Activated naive CD4-positive, alpha-beta T cell treated with anti-CD3 and anti-CD28 coated beads for 36 hours (primary cell): ENCODE measurements at regions of chr7 and their contacts with region 1.

Region 1: GRCh38 chr7:31134246-31135188 is 82.4 kb downstream of the ADCYAP1R1 start:
- DNase-seq: peak; percentile 68
- H3K4me3 Mint-ChIP-seq: no peak overlapping the region
- H3K27ac Mint-ChIP-seq: no peak overlapping the region
- H3K4me1 Mint-ChIP-seq: peaks cover 1% of the 10 kb centered on the region
- H3K27me3 Mint-ChIP-seq: no peaks in the 10 kb centered on the region

Region 2: GRCh38 chr7:30983042-30983913 is 151.2 kb before region 1 on chr7:
- CTCF ChIA-PET with region 1: interaction called, 25 read pairs
- intact Hi-C with region 1: no loop called
- DNase-seq: peak; percentile 85
- H3K4me3 Mint-ChIP-seq: no peak overlapping the region
- H3K27ac Mint-ChIP-seq: no peak overlapping the region
- H3K4me1 Mint-ChIP-seq: peaks cover 4% of the 10 kb centered on the region
- H3K27me3 Mint-ChIP-seq: peaks cover 45% of the 10 kb centered on the region

Region 3: GRCh38 chr7:31122649-31123058 is 11.9 kb before region 1 on chr7:
- CTCF ChIA-PET with region 1: interaction called, 61 read pairs
- intact Hi-C with region 1: no loop called
- DNase-seq: peak; percentile 64
- H3K4me3 Mint-ChIP-seq: no peak overlapping the region
- H3K27ac Mint-ChIP-seq: no peak overlapping the region
- H3K4me1 Mint-ChIP-seq: no peaks in the 10 kb centered on the region
- H3K27me3 Mint-ChIP-seq: peaks cover 2% of the 10 kb centered on the region

Region 4: DNA sequence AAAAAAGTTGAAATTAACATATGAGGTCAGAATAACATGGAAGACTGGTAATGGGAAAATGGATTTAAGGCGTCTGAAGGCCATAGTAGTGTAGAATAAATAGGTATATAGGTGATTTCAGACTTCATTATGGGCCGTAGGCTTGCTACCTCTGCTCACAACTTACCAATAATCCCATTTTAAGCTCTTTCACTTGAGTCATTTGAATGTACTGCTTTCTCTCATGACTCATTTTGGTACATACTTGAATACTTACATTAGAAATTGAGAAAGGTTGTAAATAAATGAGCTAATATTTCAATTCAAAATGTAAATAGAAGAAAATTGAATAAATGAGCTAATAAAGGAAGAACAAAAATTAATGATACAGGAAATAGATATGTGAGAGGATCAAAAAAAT is 248.2 kb after region 1 on chr7:
- CTCF ChIA-PET with region 1: no interaction called
- intact Hi-C with region 1: no loop called
- DNase-seq: no peak
- H3K4me3 Mint-ChIP-seq: no peak overlapping the region
- H3K27ac Mint-ChIP-seq: no peak overlapping the region
- H3K4me1 Mint-ChIP-seq: no peaks in the 10 kb centered on the region
- H3K27me3 Mint-ChIP-seq: no peaks in the 10 kb centered on the region

Region 5: DNA sequence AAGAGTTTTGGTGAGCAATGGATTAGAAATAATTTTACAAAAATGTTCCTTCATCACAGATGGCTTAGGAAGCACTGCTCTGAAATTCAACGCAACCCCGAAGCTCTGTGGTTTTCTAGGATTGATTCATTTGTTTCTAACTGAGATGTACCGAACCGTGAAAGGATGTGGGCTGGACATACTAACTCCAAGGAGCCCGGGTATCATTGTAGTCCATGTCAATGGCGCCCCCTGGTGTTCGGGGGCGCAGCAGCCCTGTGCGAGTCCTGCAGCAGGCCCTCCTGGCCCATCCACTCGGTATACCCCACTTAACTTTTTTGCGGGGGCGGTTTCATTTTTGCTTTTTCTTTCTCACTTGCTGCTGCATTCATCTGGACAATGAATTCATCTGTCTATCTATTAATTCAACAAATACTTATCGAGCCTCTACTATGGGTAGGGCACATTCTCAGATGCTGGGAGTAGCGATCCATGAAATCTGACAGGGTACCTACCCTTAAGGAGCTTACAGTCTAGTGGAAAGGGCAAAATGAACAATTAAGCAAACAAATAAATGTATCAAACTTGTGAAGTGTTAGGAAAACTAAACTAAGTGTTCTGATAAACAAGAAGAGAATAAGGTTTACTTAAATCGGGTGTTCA is 354.2 kb after region 1 on chr7:
- CTCF ChIA-PET with region 1: interaction called, 5 read pairs
- intact Hi-C with region 1: loop called (anchors 1 kb)
- DNase-seq: peak; percentile 52
- H3K4me3 Mint-ChIP-seq: no peak overlapping the region
- H3K27ac Mint-ChIP-seq: no peak overlapping the region
- H3K4me1 Mint-ChIP-seq: no peaks in the 10 kb centered on the region
- H3K27me3 Mint-ChIP-seq: no peaks in the 10 kb centered on the region

Region 6: GRCh38 chr7:31735991-31736982 is 601.8 kb after region 1 on chr7:
- CTCF ChIA-PET with region 1: no interaction called
- intact Hi-C with region 1: loop called (anchors 1 kb)
- DNase-seq: peak; percentile 26
- H3K4me3 Mint-ChIP-seq: no peak overlapping the region
- H3K27ac Mint-ChIP-seq: no peak overlapping the region
- H3K4me1 Mint-ChIP-seq: no peaks in the 10 kb centered on the region
- H3K27me3 Mint-ChIP-seq: peaks cover 4% of the 10 kb centered on the region

Region 7: DNA sequence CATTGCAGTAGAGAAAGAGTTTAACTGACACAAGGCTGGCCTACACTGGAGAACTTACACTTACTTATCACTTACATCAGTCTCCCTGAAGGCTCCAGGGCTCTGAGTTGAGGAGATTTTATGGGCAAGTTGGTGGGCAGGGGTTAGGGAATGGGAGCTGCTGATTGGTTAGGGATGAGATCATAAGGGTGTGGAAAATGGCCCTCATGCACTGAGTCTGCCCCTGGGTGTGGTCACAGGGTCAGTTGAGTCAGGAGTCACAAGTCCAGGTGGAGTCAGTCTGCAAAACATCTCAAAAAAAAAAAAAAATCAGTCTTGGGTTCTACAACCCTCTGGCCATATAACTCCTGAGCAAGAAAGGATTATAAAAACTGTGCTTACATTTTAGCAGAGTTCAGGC is 613.0 kb after region 1 on chr7:
- CTCF ChIA-PET with region 1: no interaction called
- intact Hi-C with region 1: no loop called
- DNase-seq: no peak
- H3K4me3 Mint-ChIP-seq: no peak overlapping the region
- H3K27ac Mint-ChIP-seq: no peak overlapping the region
- H3K4me1 Mint-ChIP-seq: no peaks in the 10 kb centered on the region
- H3K27me3 Mint-ChIP-seq: peaks cover 15% of the 10 kb centered on the region